AG04449 (cell line): ENCODE measurements at regions of chr5 and their contacts with region 1.

Region 1: DNA sequence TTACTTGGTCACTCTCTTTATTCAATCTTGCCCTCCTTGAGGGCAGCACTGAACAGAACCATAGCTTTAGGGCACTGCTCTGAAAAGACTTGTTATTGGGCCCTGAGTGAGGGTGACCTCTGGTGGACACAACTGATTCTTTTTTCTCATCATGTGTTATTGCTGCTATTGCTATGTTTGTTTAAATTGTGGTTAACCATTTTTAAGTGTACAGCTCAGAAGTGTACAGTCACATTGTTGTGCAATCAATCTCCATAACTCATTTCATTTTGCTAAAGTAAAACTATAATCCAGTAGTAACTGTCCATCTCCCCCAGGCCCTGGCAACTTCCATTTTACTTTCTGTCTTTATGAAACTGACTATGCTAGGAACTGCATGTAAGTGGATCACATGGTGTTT is 351.1 kb upstream of the RIOK2 start:
- DNase-seq: peak; percentile 77
- H3K4me3 ChIP-seq: no peak overlapping the region
- CTCF ChIP-seq: peak; percentile 66

Region 2: DNA sequence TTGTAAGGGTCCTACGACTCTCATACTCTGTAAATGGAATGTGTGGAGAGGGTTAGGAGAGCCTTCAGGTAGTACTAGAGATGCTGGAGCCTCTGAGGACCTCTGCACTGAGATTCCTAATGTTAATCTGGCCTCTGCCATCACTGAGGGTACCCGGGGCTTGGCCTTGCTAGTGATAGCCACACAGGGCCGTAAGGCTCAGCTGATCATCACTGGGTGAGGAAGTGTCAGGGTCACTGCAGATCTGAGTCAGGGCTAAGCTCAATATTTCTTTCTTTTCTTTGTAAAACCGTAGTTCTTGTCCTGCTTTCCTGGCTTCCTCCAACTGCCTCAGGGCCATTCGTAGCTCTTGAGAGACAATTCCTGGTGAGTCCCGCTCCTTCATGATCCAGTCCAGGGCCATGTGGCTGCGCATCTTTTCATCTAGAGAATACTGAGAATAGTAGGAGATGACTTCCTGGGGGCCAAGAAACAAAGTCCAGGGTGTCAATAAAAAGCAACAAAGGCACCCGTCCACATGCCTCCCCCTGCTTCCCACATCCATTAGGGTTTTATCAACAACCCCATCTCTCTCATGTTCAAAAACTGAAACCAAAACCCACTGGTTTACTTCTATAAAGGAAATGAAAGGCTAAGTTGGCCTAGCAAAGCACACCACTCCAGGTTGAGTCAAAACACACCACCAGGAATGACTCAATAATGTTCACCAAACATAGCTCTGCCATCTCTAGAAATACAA is 439.4 kb before region 1 on chr5:
- CTCF ChIA-PET with region 1: no interaction called
- POLR2A ChIA-PET with region 1: no interaction called
- DNase-seq: no peak
- H3K4me3 ChIP-seq: no peak overlapping the region
- CTCF ChIP-seq: no peak

Region 3: DNA sequence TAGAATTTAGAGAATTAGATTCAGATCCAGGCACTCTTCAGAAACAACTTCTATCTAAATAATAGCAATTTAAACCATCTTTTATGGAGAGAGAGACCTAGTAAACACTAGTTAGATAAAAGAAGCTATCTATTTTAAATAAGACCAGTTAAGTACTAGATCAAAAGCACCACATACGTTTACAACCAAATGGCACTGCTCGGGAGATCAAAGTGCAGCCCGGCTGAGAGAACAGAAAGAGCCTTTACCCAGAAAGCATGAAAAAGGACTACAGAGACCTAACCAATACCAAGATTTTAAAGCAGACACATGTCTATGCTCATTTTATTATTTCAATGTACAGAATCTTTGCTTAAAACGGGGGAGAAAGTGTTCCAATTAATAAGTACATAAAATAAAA is 422.6 kb before region 1 on chr5:
- CTCF ChIA-PET with region 1: no interaction called
- POLR2A ChIA-PET with region 1: no interaction called
- DNase-seq: no peak
- H3K4me3 ChIP-seq: no peak overlapping the region
- CTCF ChIP-seq: no peak

Region 4: GRCh38 chr5:97231025-97231636 is 303.0 kb before region 1 on chr5:
- CTCF ChIA-PET with region 1: interaction called, 67 read pairs
- POLR2A ChIA-PET with region 1: no interaction called
- DNase-seq: peak; percentile 44
- H3K4me3 ChIP-seq: no peak overlapping the region
- CTCF ChIP-seq: peak; percentile 74

Region 5: DNA sequence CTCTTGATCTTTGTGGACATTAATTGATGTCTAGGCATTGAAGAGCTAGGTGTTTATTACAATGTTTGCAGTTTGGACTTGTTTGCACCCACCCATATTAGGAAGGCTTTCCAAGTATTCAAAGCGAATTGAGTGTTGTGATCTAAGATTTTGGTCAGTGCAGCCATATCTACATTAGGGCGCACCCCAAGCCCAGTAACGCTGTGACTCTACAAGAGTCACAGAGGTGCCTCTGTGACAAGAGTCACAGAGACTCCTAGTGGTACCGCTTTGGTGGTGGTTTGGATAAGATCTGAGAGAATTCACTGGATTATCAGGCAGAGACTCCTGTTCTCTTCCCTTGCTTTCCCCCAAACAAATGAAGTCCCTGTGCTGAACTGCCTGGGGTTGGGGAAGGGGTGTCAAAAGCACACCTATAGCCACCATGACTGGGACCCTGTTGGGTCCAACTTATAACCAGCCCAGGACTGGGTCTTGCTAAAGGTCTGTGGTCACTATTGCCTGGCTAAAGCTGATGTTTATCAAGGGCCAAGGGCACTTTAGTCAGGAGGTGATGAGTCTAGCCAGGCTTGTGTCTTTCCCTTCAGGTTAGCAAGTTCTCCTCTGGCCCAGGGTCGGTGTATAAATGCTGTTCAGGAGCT is 237.0 kb before region 1 on chr5:
- CTCF ChIA-PET with region 1: interaction called, 10 read pairs
- POLR2A ChIA-PET with region 1: no interaction called
- DNase-seq: no peak
- H3K4me3 ChIP-seq: no peak overlapping the region
- CTCF ChIP-seq: peak; percentile 18

Region 6: GRCh38 chr5:97425511-97425910 is 108.7 kb before region 1 on chr5:
- CTCF ChIA-PET with region 1: interaction called, 20 read pairs
- POLR2A ChIA-PET with region 1: no interaction called
- DNase-seq: no peak
- H3K4me3 ChIP-seq: no peak overlapping the region
- CTCF ChIP-seq: peak; percentile 38

Region 7: GRCh38 chr5:97547999-97548738 is 14.0 kb after region 1 on chr5:
- CTCF ChIA-PET with region 1: interaction called, 29 read pairs
- POLR2A ChIA-PET with region 1: no interaction called
- DNase-seq: no peak
- H3K4me3 ChIP-seq: no peak overlapping the region
- CTCF ChIP-seq: no peak

Region 8: GRCh38 chr5:97559827-97560598 is 25.8 kb after region 1 on chr5:
- CTCF ChIA-PET with region 1: interaction called, 17 read pairs
- POLR2A ChIA-PET with region 1: interaction called, 3 read pairs
- DNase-seq: no peak
- H3K4me3 ChIP-seq: no peak overlapping the region
- CTCF ChIP-seq: no peak

Region 9: DNA sequence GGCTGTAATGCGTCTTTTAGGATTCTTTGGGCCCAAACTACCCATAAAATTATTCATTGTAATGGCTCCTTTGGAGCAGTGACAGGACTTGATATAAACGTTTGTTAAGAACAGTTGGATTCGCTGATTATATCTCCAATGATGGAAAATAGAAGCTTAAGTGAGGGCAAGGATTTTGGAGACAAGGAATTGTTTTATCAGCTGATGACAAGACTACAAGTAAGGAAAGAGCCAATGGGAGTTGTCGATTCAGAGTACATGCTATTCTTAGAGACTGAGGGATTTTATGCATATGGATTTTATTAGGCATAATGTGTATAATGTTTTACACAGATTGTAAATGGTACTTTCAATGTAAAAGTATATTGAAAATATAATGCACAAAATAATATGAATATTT is 74.3 kb after region 1 on chr5:
- CTCF ChIA-PET with region 1: no interaction called
- POLR2A ChIA-PET with region 1: no interaction called
- DNase-seq: no peak
- H3K4me3 ChIP-seq: no peak overlapping the region
- CTCF ChIP-seq: no peak